Vagina (tissue), 2 donors: ENCODE measurements at regions of chr2 and their contacts with region 1.

Region 1: DNA sequence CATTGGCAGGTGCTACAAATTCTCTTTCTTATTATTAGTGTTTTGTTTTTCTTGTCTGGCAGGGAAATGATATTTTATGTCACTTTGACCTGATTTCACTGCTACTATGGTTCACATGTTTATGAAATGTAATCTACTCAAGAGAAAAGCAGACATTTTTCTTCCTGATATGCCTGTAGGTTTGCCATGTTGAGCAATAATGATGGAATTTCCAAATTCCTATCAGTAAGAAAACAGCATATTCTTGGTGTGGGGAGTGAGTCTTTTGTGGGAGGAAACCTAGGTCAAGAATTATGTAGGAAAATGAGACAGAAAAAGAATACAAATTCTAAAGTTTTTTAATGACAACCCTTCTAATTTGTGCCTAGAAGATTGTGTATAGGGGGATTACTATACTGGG is 356.4 kb downstream of the SLC4A3 start:
- DNase-seq: no peak
- H3K4me3 ChIP-seq: no peak overlapping the region
- H3K27ac ChIP-seq: no peak overlapping the region
- H3K4me1 ChIP-seq: no peaks in the 10 kb centered on the region
- H3K27me3 ChIP-seq: no peaks in the 10 kb centered on the region
- CTCF ChIP-seq: no peak
- POLR2A ChIP-seq: no peak

Region 2: DNA sequence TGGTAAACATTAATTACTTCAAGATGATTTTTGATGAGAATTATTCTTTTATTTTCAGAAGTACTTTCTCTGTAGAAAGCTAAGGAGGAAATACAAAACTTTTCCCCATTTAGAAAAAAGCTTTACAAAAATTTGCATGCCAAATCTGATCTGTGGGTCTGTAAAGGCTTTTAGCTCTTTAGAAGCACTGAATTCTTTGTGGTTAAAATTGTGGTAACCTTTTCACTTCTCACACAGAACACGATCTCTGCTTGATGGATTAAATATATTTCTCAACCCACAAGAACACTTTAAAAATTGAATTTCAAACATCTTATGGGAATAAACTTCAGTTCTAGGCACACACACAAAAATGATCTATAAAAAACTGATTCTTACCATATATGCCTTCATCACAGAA is 1501.2 kb before region 1 on chr2:
- intact Hi-C with region 1: no loop called
- DNase-seq: no peak
- H3K4me3 ChIP-seq: no peak overlapping the region
- H3K27ac ChIP-seq: no peak overlapping the region
- H3K4me1 ChIP-seq: no peaks in the 10 kb centered on the region
- H3K27me3 ChIP-seq: no peaks in the 10 kb centered on the region
- CTCF ChIP-seq: no peak
- POLR2A ChIP-seq: no peak

Region 3: DNA sequence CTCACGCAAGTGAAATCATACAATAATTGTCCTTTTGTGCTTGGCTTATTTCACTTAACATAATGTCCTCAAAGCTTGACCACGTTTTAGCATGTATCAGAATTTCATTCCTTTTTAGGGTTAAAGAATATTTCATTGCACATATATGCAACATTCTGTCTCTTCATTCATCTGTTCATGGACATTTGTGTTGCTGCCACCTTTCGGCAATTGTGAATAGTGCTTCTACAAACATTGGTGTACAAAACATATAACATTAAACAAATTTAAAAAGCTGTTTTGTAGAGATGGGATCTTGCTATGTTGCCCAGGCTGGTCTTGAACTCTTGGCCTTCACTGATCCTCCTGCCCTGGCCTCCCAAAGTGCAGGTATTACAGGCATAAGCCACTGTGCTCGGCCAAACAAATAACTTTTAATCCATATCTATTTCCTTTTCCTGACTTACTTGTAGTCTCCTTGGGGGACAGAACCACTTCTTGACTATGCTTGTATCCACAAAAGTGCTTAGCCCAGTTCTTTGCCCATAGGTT is 147.1 kb before region 1 on chr2:
- intact Hi-C with region 1: no loop called
- DNase-seq: no peak
- H3K4me3 ChIP-seq: no peak overlapping the region
- H3K27ac ChIP-seq: no peak overlapping the region
- H3K4me1 ChIP-seq: no peaks in the 10 kb centered on the region
- H3K27me3 ChIP-seq: no peaks in the 10 kb centered on the region
- CTCF ChIP-seq: no peak
- POLR2A ChIP-seq: no peak

Region 4: GRCh38 chr2:219947575-219947974 is 36.3 kb before region 1 on chr2:
- intact Hi-C with region 1: no loop called
- DNase-seq: no peak
- H3K4me3 ChIP-seq: no peak overlapping the region
- H3K27ac ChIP-seq: no peak overlapping the region
- H3K4me1 ChIP-seq: no peaks in the 10 kb centered on the region
- H3K27me3 ChIP-seq: no peaks in the 10 kb centered on the region
- CTCF ChIP-seq: no peak
- POLR2A ChIP-seq: no peak

Region 5: DNA sequence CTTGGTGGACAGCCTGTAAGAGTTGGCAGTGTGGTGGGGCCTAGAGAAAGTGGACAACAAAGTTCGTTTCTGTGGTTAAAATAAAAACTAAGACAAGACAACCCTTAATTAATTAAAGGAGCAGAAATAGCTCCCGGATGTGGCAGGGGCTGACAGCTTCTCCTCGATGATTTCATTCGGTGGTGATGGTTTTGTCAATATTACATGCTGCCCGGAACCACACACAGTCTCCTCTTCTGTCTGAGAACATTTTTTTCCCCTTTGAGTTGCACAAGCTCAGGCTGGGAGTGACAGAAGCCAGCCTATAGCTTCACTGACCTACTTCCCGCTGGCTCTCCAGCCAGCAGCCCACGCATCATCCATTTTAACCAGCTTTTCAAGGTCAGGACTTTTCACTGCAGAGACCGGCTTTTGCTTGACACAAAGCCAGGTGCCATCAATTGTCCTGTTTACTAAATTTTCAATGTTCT is 22.4 kb after region 1 on chr2:
- intact Hi-C with region 1: no loop called
- DNase-seq: no peak
- H3K4me3 ChIP-seq: no peak overlapping the region
- H3K27ac ChIP-seq: no peak overlapping the region
- H3K4me1 ChIP-seq: no peaks in the 10 kb centered on the region
- H3K27me3 ChIP-seq: no peaks in the 10 kb centered on the region
- CTCF ChIP-seq: no peak
- POLR2A ChIP-seq: no peak

Region 6: GRCh38 chr2:220178991-220179648 is 195.3 kb after region 1 on chr2:
- intact Hi-C with region 1: loop called (anchors 5 kb)
- DNase-seq: no peak
- H3K4me3 ChIP-seq: no peak overlapping the region
- H3K27ac ChIP-seq: no peak overlapping the region
- H3K4me1 ChIP-seq: no peaks in the 10 kb centered on the region
- H3K27me3 ChIP-seq: no peaks in the 10 kb centered on the region
- CTCF ChIP-seq: no peak
- POLR2A ChIP-seq: no peak